Caco-2 (cell line): ENCODE measurements at regions of chr6 and their contacts with region 1.

Region 1: GRCh38 chr6:145887969-145888368 is 73.4 kb upstream of the FBXO30 start:
- DNase-seq: peak in 1 of 2 experiments; percentile 47
- H3K4me3 ChIP-seq: no peak overlapping the region
- H3K4me3 Mint-ChIP-seq: no peak overlapping the region
- H3K27ac Mint-ChIP-seq: no peak overlapping the region
- H3K4me1 ChIP-seq: peaks cover 45% of the 10 kb centered on the region
- H3K4me1 Mint-ChIP-seq: peaks cover 2% of the 10 kb centered on the region
- H3K27me3 ChIP-seq: no peaks in the 10 kb centered on the region
- H3K27me3 Mint-ChIP-seq: no peaks in the 10 kb centered on the region
- CTCF ChIP-seq: peak in 1 of 2 experiments; percentile 50

Region 2: DNA sequence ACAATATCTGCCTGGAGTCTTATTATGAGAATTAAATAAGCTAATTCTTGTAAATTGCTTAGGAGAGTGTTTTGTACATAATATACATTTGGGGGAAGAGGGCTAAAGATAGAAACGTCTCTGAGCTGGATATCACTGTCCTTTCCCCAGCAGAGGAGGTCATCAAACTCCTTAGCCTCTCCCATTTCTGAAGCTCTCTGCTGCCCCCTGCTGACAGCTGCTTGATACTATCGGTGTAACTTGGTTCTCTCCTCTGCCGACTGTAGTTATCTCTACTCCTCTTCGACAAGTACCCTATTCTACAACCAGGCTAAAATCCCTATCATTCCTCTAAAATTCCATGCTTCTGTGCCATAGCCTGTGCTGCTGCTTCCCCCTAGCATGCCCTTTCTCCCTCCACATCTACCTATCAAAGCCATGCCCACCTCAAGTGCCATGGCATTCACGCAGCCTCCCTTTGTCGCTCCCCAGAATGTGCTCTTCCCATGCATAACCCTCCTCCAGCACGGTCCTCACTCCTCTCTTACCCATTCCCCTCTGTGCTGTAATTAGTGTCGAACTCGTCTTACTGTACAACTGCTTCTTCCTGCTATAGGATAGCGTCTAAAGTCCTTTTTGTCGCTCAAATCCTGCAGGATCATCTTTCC is 253.9 kb before region 1 on chr6:
- CTCF ChIA-PET with region 1: no interaction called
- POLR2A ChIA-PET with region 1: no interaction called
- intact Hi-C with region 1: loop called (anchors 5 kb)
- DNase-seq: peak; percentile 80 to 87
- H3K4me3 ChIP-seq: no peak overlapping the region
- H3K4me3 Mint-ChIP-seq: no peak overlapping the region
- H3K27ac Mint-ChIP-seq: no peak overlapping the region
- H3K4me1 ChIP-seq: no peaks in the 10 kb centered on the region
- H3K4me1 Mint-ChIP-seq: peaks cover 15% of the 10 kb centered on the region
- H3K27me3 ChIP-seq: no peaks in the 10 kb centered on the region
- H3K27me3 Mint-ChIP-seq: no peaks in the 10 kb centered on the region
- CTCF ChIP-seq: peak; percentile 85 to 90

Region 3: DNA sequence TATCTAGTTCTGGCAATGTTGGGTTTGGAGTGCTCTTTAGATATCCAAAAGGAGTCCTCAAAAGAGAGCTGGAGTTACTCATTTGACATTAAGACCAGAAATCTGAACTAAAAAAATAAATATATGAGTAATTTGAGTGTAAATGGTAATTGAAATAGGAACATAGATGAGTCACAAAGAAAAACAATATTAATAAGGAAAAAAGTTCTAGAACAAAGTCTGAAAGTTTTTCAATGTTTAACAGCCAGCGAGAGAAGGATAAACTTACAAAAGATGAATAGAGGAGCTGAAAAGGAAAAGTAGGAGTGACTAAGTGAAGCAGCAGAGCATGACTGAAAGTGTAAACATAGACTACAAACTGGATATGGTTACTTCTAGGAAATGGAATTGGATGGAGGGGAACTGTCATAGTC is 199.5 kb before region 1 on chr6:
- CTCF ChIA-PET with region 1: no interaction called
- POLR2A ChIA-PET with region 1: no interaction called
- intact Hi-C with region 1: no loop called
- DNase-seq: no peak
- H3K4me3 ChIP-seq: no peak overlapping the region
- H3K4me3 Mint-ChIP-seq: no peak overlapping the region
- H3K27ac Mint-ChIP-seq: no peak overlapping the region
- H3K4me1 ChIP-seq: no peaks in the 10 kb centered on the region
- H3K4me1 Mint-ChIP-seq: no peaks in the 10 kb centered on the region
- H3K27me3 ChIP-seq: no peaks in the 10 kb centered on the region
- H3K27me3 Mint-ChIP-seq: no peaks in the 10 kb centered on the region
- CTCF ChIP-seq: no peak

Region 4: DNA sequence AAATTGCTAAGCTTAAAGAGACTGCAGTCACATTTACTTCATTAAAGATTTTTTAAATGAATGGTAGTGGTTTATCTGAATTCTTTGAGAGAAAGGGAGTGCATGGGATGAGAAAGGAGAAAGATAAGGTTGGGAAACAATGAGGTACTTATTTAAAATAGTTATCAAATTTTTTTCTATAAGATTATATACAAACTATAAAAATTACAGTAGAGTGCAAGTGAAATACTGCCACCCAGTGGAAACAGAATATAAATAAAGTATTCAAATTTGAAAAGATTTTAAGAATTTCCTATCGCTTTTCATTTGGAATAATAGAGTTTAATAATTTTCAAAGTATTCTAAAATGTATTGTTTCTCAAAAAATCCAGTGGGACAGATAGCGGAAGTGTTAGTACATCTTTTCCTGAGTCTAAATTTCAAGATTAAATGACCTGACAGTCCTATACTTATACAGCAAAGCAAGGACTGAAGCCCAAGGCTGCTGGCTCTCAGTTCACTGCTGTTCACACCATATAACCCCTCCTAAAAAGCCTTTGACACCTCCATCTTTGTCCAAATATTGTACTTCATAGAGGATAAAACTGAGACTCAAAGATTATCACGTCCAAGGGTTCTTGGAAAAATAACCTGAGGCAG is 183.7 kb before region 1 on chr6:
- CTCF ChIA-PET with region 1: no interaction called
- POLR2A ChIA-PET with region 1: no interaction called
- intact Hi-C with region 1: loop called (anchors 5 kb)
- DNase-seq: no peak
- H3K4me3 ChIP-seq: no peak overlapping the region
- H3K4me3 Mint-ChIP-seq: no peak overlapping the region
- H3K27ac Mint-ChIP-seq: no peak overlapping the region
- H3K4me1 ChIP-seq: no peaks in the 10 kb centered on the region
- H3K4me1 Mint-ChIP-seq: no peaks in the 10 kb centered on the region
- H3K27me3 ChIP-seq: no peaks in the 10 kb centered on the region
- H3K27me3 Mint-ChIP-seq: no peaks in the 10 kb centered on the region
- CTCF ChIP-seq: peak; percentile 20 to 58

Region 5: GRCh38 chr6:145734486-145735355 is 153.2 kb before region 1 on chr6:
- CTCF ChIA-PET with region 1: interaction called, 3 read pairs
- POLR2A ChIA-PET with region 1: interaction called, 4 read pairs
- intact Hi-C with region 1: loop called (anchors 2 kb)
- DNase-seq: peak; percentile 93
- H3K4me3 ChIP-seq: peak overlapping the region; percentile 79
- H3K4me3 Mint-ChIP-seq: peak overlapping the region; percentile 93
- H3K27ac Mint-ChIP-seq: peak overlapping the region; percentile 95
- H3K4me1 ChIP-seq: peaks cover 18% of the 10 kb centered on the region
- H3K4me1 Mint-ChIP-seq: peaks cover 10% of the 10 kb centered on the region
- H3K27me3 ChIP-seq: no peaks in the 10 kb centered on the region
- H3K27me3 Mint-ChIP-seq: no peaks in the 10 kb centered on the region
- CTCF ChIP-seq: no peak

Region 6: DNA sequence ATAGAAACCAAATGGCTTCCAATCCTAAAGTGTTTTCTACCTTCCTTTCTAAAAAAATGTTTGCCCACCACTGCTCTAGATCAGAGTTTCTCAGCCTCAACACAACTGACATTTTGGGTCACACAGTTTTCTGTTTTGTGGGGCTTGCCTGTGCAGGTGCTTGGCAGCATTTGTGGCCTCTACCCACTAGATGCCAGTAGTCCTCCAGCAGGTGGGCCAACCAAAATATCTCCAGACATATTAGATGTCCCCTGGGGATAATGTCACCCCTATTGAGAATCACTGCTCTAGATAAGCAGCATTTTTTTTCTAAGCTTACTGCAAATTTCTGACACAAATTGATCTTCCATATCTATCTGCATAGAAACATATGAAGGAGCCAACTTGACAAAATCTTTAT is 126.4 kb before region 1 on chr6:
- CTCF ChIA-PET with region 1: no interaction called
- POLR2A ChIA-PET with region 1: no interaction called
- intact Hi-C with region 1: no loop called
- DNase-seq: no peak
- H3K4me3 ChIP-seq: no peak overlapping the region
- H3K4me3 Mint-ChIP-seq: no peak overlapping the region
- H3K27ac Mint-ChIP-seq: no peak overlapping the region
- H3K4me1 ChIP-seq: peaks cover 10% of the 10 kb centered on the region; the same call in 1 of the 2 replicates
- H3K4me1 Mint-ChIP-seq: peaks cover 9% of the 10 kb centered on the region
- H3K27me3 ChIP-seq: no peaks in the 10 kb centered on the region
- H3K27me3 Mint-ChIP-seq: no peaks in the 10 kb centered on the region
- CTCF ChIP-seq: no peak

Region 7: GRCh38 chr6:145866456-145867396 is 21.2 kb before region 1 on chr6:
- CTCF ChIA-PET with region 1: no interaction called
- POLR2A ChIA-PET with region 1: no interaction called
- intact Hi-C with region 1: no loop called
- DNase-seq: peak in 1 of 2 experiments; percentile 37
- H3K4me3 ChIP-seq: no peak overlapping the region
- H3K4me3 Mint-ChIP-seq: no peak overlapping the region
- H3K27ac Mint-ChIP-seq: peak overlapping the region; percentile 25
- H3K4me1 ChIP-seq: peaks cover 22% of the 10 kb centered on the region
- H3K4me1 Mint-ChIP-seq: peaks cover 23% of the 10 kb centered on the region
- H3K27me3 ChIP-seq: no peaks in the 10 kb centered on the region
- H3K27me3 Mint-ChIP-seq: no peaks in the 10 kb centered on the region
- CTCF ChIP-seq: no peak